ENCODE measurements at regions of chr15 and their contacts with region 1.

Region 1: DNA sequence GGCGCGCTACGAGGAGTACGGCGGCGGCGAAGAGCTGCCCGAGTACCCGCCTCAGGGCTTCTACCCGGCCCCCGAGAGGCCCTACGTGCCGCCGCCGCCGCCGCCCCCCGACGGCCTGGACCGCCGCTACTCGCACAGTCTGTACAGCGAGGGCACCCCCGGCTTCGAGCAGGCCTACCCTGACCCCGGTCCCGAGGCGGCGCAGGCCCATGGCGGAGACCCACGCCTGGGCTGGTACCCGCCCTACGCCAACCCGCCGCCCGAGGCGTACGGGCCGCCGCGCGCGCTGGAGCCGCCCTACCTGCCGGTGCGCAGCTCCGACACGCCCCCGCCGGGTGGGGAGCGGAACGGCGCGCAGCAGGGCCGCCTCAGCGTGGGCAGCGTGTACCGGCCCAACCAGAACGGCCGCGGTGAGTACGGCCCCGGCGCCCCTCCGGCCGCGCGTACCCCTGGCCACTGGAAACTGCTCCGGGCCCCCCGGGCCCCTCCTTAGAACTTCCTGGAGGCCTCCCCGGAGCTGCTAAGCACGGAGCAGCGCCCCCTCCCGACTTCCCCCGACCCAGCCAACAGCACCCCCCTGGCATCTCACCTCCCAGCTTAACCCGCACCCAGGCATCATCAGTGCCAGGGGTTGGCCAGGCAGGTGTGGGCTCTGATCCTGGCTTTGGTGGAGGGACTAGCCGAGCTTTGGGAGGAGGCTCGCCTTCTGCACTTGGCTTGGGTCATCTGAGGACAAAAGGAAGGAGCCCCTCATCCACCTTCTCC is 1.4 kb downstream of the LOXL1 start:
- DNase-seq: peak; percentile 85
- H3K4me3 Mint-ChIP-seq: peak overlapping the region; percentile 68
- H3K27ac Mint-ChIP-seq: peak overlapping the region; percentile 57
- H3K4me1 Mint-ChIP-seq: peaks cover 41% of the 10 kb centered on the region
- H3K27me3 Mint-ChIP-seq: no peaks in the 10 kb centered on the region

Region 2: DNA sequence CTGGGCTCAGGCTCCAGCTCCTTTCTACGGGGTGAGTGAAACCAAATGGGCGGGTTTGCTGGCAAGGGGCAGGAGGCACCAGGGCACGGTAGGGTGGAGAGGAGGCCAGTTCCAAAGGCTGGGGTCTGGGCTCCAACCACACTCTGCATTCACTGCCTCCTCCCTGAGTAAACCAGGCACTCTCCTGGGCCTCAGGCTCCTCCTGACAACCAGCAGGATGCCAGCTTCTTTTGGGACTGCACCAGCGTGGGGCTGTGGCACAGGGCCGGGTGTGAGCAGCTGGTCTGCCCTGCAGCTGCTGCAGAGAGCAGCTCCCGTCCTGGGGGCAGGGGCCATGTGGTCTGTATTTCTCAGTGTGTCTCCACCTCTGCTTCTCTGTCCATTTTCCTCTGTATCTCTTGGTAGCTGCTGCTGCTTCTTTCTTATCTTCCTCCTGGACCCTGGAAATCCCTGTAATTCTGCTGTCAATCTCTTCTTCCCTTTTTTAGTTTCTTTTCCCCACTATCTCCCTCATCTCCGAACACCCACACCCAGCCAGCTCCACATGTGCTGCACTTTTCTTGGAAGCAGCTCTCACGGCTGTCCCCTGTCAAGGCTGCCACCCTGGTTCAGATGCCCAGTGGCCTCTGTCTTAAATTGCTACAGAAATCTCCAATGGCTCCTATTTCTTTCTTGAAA is 109.2 kb before region 1 on chr15:
- CTCF ChIA-PET with region 1: no interaction called
- POLR2A ChIA-PET with region 1: no interaction called
- intact Hi-C with region 1: no loop called
- DNase-seq: no peak
- H3K4me3 Mint-ChIP-seq: no peak overlapping the region
- H3K27ac Mint-ChIP-seq: no peak overlapping the region
- H3K4me1 Mint-ChIP-seq: no peaks in the 10 kb centered on the region
- H3K27me3 Mint-ChIP-seq: peaks cover 4% of the 10 kb centered on the region

Region 3: DNA sequence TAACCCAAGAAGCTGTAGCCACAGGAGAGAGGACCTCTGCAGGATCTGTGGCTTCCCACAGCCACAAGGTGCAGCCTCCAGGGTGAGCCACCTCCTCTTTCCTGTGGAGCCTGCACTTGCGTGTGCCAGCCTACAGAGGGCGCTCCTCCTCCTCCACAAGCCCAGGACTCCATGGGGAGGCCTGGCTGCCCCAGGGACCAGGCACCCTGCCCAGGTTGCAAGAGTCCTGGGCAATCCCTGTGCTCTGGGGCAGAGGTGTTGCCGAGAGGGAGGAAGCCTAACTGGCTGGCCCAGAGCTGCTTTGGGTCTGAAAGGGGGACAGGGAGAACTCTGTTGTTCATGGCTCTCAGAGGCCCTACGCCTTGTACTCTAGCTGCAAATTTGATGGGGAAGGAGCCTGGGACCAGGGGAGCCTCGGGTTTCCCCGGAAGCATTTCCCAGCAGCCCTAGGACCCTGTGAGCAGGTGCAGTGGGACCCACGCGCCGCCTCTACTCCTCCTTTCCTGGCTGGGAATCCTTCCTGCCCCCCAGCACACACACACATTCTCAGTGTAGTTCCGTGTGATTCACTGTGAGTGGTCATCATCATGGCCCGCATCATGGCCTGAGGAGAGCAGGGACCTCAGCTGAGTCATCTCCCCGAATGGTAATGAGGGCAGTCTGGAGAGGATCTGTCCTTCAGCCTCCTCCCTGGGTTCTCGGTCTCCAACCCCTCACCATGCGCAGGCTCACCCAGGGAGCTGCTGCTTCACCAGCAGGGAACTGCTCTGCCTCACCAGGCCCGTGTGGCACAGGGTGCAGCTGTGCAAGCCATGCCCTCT is 30.0 kb before region 1 on chr15:
- CTCF ChIA-PET with region 1: interaction called, 21 read pairs
- POLR2A ChIA-PET with region 1: interaction called, 3 read pairs
- intact Hi-C with region 1: no loop called
- DNase-seq: peak; percentile 82
- H3K4me3 Mint-ChIP-seq: no peak overlapping the region
- H3K27ac Mint-ChIP-seq: no peak overlapping the region
- H3K4me1 Mint-ChIP-seq: no peaks in the 10 kb centered on the region
- H3K27me3 Mint-ChIP-seq: no peaks in the 10 kb centered on the region

Region 4: GRCh38 chr15:73908030-73908821 is 19.4 kb before region 1 on chr15:
- CTCF ChIA-PET with region 1: interaction called, 26 read pairs
- POLR2A ChIA-PET with region 1: interaction called, 3 read pairs
- intact Hi-C with region 1: no loop called
- DNase-seq: peak; percentile 86
- H3K4me3 Mint-ChIP-seq: no peak overlapping the region
- H3K27ac Mint-ChIP-seq: no peak overlapping the region
- H3K4me1 Mint-ChIP-seq: no peaks in the 10 kb centered on the region
- H3K27me3 Mint-ChIP-seq: no peaks in the 10 kb centered on the region

Region 5: GRCh38 chr15:73950831-73951561 is 23.3 kb after region 1 on chr15:
- CTCF ChIA-PET with region 1: interaction called, 15 read pairs
- POLR2A ChIA-PET with region 1: no interaction called
- intact Hi-C with region 1: no loop called
- DNase-seq: peak; percentile 81
- H3K4me3 Mint-ChIP-seq: no peak overlapping the region
- H3K27ac Mint-ChIP-seq: peak overlapping the region; percentile 52
- H3K4me1 Mint-ChIP-seq: peaks cover 6% of the 10 kb centered on the region
- H3K27me3 Mint-ChIP-seq: no peaks in the 10 kb centered on the region

Region 6: GRCh38 chr15:73959012-73959581 is 31.4 kb after region 1 on chr15:
- CTCF ChIA-PET with region 1: interaction called, 22 read pairs
- POLR2A ChIA-PET with region 1: no interaction called
- intact Hi-C with region 1: no loop called
- DNase-seq: peak; percentile 58
- H3K4me3 Mint-ChIP-seq: no peak overlapping the region
- H3K27ac Mint-ChIP-seq: peak overlapping the region; percentile 51
- H3K4me1 Mint-ChIP-seq: peaks cover 25% of the 10 kb centered on the region
- H3K27me3 Mint-ChIP-seq: no peaks in the 10 kb centered on the region

Region 7: GRCh38 chr15:73991726-73992593 is 64.3 kb after region 1 on chr15 and contains the start of gene STOML1:
- CTCF ChIA-PET with region 1: interaction called, 4 read pairs
- POLR2A ChIA-PET with region 1: no interaction called
- intact Hi-C with region 1: loop called (anchors 2 kb)
- DNase-seq: peak; percentile 97
- H3K4me3 Mint-ChIP-seq: peak within 1 kb of the TSS; percentile 80
- H3K27ac Mint-ChIP-seq: peak within 1 kb of the TSS; percentile 70
- H3K4me1 Mint-ChIP-seq: peaks cover 30% of the 10 kb centered on the region
- H3K27me3 Mint-ChIP-seq: no peaks in the 10 kb centered on the region
- total RNA-seq, gene STOML1: 7.1 to 10.1 TPM

Region 8: DNA sequence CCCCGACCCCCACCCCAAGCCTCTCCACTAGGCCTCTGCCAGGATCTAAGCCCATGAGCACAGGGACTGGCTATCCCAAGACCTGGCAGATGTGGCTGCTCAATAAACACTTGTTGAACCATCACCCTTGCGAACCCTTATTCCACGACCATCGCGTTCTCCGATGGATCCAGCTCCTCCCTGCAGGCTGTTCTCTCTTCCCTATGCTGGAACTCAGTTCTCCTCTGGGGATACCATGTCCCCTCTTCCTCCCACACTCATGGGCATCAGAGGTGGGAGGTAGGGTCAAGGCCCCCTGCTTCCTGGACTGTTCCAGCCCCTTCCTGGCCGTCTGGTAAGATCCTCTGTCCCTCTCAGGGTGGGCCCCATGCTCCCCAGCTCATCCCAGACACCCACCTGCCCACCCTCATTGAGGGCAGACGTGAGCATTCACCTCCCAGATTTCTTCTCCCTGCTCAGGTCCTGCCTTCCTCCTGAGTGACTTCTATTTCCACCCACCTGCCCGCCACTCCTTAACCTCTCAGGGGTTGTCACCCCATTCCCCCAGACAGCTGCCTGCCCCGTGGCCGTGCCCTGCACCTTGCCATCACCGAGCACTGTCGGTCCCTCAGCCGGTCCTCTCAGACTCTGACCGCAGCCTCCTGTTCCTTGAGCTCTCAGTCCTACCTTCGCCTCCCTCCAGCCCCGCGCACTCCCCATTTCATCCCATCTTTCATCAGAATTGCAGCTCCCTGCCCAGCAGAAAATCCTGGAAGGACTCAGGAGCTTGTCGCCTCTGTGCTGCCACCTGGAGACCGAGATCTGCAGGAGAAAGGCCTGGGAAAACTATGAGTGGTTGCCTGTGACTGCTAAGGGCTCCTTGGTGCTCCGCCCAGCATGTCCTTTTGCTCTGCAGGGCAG is 108.9 kb after region 1 on chr15:
- CTCF ChIA-PET with region 1: no interaction called
- POLR2A ChIA-PET with region 1: no interaction called
- intact Hi-C with region 1: no loop called
- DNase-seq: no peak
- H3K4me3 Mint-ChIP-seq: no peak overlapping the region
- H3K27ac Mint-ChIP-seq: no peak overlapping the region
- H3K4me1 Mint-ChIP-seq: no peaks in the 10 kb centered on the region
- H3K27me3 Mint-ChIP-seq: no peaks in the 10 kb centered on the region

Region 9: GRCh38 chr15:74155766-74156417 is 228.2 kb after region 1 on chr15:
- CTCF ChIA-PET with region 1: no interaction called
- POLR2A ChIA-PET with region 1: no interaction called
- intact Hi-C with region 1: no loop called
- DNase-seq: no peak
- H3K4me3 Mint-ChIP-seq: no peak overlapping the region
- H3K27ac Mint-ChIP-seq: no peak overlapping the region
- H3K4me1 Mint-ChIP-seq: peaks cover 19% of the 10 kb centered on the region
- H3K27me3 Mint-ChIP-seq: peaks cover 22% of the 10 kb centered on the region